HepG2 (cell line): ENCODE measurements at regions of chr2 and their contacts with region 1.

Region 1: GRCh38 chr2:109715313-109715805 is 78.7 kb upstream of the RGPD5 start:
- DNase-seq: peak; percentile 76
- ATAC-seq: peak; percentile 96
- H3K4me3 ChIP-seq: no peak overlapping the region
- H3K27ac ChIP-seq: no peak overlapping the region
- H3K4me1 ChIP-seq: peaks cover 40% of the 10 kb centered on the region
- H3K27me3 ChIP-seq: peaks cover 0 to 6% of the 10 kb centered on the region in 2 experiments; a peak in 4 of 5 replicates
- CTCF ChIP-seq: peak; percentile 98
- EP300 ChIP-seq: no peak
- POLR2A ChIP-seq: no peak
- RAD21 ChIP-seq: peak; percentile 96

Region 2: GRCh38 chr2:109382951-109383350 is 332.4 kb before region 1 on chr2:
- CTCF ChIA-PET with region 1: no interaction called
- POLR2A ChIA-PET with region 1: no interaction called
- in situ Hi-C with region 1: no loop called
- intact Hi-C with region 1: no loop called
- DNase-seq: no peak
- ATAC-seq: no peak
- H3K4me3 ChIP-seq: no peak overlapping the region
- H3K27ac ChIP-seq: no peak overlapping the region
- H3K4me1 ChIP-seq: no peaks in the 10 kb centered on the region
- H3K27me3 ChIP-seq: no peaks in the 10 kb centered on the region
- CTCF ChIP-seq: no peak
- EP300 ChIP-seq: no peak
- POLR2A ChIP-seq: no peak
- RAD21 ChIP-seq: no peak

Region 3: GRCh38 chr2:109516445-109517117 is 198.8 kb before region 1 on chr2:
- CTCF ChIA-PET with region 1: interaction called, 9 read pairs
- POLR2A ChIA-PET with region 1: no interaction called
- in situ Hi-C with region 1: no loop called
- intact Hi-C with region 1: loop called (anchors 1 kb)
- DNase-seq: peak; percentile 73
- ATAC-seq: peak; percentile 94
- H3K4me3 ChIP-seq: peak overlapping the region; percentile 40 to 77 (median 45)
- H3K27ac ChIP-seq: peak overlapping the region; percentile 14
- H3K4me1 ChIP-seq: peaks cover 36% of the 10 kb centered on the region
- H3K27me3 ChIP-seq: peaks cover 0 to 17% of the 10 kb centered on the region in 2 experiments; a peak in 2 of 5 replicates
- CTCF ChIP-seq: peak; percentile 100
- EP300 ChIP-seq: 0 out of 4 replicates have a peak, but pooled peaks of 1 of the 2 experiments have one; percentile 20
- POLR2A ChIP-seq: 0 out of 4 replicates have a peak, but pooled peaks of 1 of the 2 experiments have one; percentile 30
- RAD21 ChIP-seq: peak; percentile 98

Region 4: DNA sequence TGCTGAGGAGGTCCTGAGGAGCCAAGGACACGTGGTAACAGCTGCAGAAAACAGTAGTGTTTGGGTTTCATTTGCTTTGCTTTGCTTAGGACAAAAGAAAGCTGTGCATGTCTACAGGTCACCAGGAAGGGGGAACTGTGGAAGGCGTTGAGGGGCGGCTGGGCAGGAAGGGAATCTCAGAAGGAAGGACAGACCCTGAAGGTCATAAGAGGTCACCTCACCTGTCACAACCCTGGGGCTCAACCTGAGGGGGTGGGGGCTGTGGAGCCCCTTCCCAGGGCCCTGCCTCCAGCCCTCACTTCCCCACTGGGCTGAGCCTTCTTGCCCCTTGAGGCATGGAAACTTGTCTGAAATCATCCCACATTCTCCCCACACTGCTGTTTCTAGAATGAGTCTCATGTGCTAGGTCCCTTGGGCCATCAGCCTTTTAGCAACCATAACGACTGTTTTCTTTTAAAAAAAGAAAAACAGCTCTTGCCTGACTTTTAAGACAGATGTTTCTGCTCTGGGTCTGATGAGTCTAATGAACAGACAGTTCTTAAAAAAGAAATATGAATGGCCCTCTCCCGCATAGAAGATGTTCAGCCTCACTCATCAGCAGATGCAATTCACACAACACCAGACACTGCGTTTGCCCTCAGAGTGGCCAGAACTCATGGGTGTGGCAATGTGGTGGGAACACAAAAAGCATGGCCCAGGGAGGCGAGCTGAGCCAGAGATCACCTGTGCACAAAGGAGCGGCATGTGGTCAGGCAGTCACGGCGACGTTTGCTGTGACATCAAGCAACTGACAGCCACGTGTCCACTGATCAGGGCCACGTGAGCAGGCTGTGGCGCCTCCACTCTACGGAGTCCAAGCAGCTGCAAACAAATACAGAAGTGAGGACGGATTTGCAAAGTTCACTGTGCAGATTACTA is 185.6 kb before region 1 on chr2:
- CTCF ChIA-PET with region 1: no interaction called
- POLR2A ChIA-PET with region 1: no interaction called
- in situ Hi-C with region 1: loop called (anchors 5 kb)
- intact Hi-C with region 1: no loop called
- DNase-seq: no peak
- ATAC-seq: no peak
- H3K4me3 ChIP-seq: no peak overlapping the region
- H3K27ac ChIP-seq: no peak overlapping the region
- H3K4me1 ChIP-seq: peaks cover 13% of the 10 kb centered on the region
- H3K27me3 ChIP-seq: peaks cover 9 to 64% of the 10 kb centered on the region in 2 experiments
- CTCF ChIP-seq: 0 out of 2 replicates have a peak, but pooled peaks have one; percentile 4
- EP300 ChIP-seq: no peak
- POLR2A ChIP-seq: no peak
- RAD21 ChIP-seq: no peak

Region 5: DNA sequence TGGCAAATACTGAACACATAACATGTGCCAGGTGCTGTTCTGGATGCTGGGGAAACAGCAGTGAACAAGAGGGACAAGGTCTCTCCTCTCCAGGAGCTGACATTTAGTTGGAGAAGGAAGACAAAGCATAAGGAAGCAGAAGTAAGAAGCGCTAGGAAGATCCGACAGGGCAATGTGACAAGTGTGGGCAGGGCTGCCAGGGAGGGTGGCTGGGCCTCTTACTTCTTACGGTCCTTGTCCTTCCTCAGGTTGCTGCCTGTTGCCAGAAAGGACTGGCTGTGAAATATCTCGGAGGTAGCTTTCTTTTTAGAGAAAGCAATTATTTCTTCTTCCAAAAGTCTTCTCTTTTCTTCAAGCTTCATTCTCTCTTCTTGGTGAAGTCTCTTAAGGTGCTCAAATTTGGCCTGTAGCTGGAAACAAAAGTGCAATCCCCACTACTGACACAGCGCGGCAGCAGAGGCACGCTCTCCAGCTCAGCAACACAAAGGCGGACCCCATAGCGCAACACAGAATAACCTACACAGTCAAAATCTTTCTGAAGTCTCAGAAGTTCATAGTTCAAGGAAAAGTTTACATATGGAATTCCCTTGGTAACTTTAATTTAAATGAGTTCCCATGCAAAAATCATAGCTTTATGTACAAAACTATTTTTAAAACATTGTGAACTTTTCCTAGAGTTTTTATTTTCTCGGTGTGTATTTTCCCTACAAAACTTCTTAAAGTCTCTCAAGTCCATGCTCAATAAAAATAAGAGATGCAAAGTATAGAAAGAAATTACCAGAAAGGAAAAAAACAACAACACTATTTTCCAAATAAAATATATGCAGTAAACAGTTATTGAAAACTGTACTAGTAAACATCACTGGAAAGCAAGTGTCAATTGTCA is 169.3 kb before region 1 on chr2:
- CTCF ChIA-PET with region 1: interaction called, 47 read pairs
- POLR2A ChIA-PET with region 1: interaction called, 3 read pairs
- in situ Hi-C with region 1: no loop called
- intact Hi-C with region 1: loop called (anchors 1 kb)
- DNase-seq: peak; percentile 63
- ATAC-seq: peak; percentile 91
- H3K4me3 ChIP-seq: no peak overlapping the region
- H3K27ac ChIP-seq: no peak overlapping the region
- H3K4me1 ChIP-seq: peaks cover 14% of the 10 kb centered on the region
- H3K27me3 ChIP-seq: no peaks in the 10 kb centered on the region
- CTCF ChIP-seq: peak; percentile 95
- EP300 ChIP-seq: 0 out of 4 replicates have a peak, but pooled peaks of 1 of the 2 experiments have one; percentile 8
- POLR2A ChIP-seq: no peak
- RAD21 ChIP-seq: peak; percentile 97

Region 6: DNA sequence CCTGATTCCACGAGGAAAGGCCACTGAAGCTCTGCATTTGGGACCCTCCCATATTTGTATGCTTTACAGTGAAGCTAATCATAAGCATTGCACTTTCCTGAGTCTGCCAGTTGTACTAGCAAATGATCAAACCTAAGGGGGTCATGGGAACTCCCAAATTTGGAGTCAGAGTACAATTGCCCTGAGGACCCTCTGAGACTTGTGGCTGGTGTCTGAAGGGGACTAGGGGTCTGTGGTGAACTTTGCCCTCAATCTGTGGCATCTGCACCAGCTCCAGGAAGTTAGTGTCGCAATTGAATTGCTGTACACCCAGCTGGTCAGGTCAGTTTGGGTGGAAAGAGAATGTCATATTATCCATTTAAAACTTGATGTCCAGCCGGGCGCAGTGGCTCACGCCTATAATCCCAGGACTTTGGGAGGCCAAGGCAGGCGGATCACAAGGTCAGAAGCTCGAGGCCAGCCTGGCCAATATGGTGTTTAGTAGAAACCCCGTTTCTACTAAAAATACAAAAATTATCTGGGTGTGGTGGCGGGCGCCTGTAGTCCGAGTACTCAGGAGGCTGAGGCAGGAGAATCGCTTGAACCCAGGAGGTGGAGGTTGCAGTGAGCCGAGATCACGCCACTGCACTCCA is 83.1 kb before region 1 on chr2:
- CTCF ChIA-PET with region 1: no interaction called
- POLR2A ChIA-PET with region 1: no interaction called
- in situ Hi-C with region 1: no loop called
- intact Hi-C with region 1: loop called (anchors 1 kb)
- DNase-seq: peak; percentile 86
- ATAC-seq: peak; percentile 55
- H3K4me3 ChIP-seq: peak overlapping the region in 1 of 3 experiments; percentile 24; a peak in 2 of 6 replicates
- H3K27ac ChIP-seq: peak overlapping the region; percentile 68
- H3K4me1 ChIP-seq: peaks cover 74% of the 10 kb centered on the region
- H3K27me3 ChIP-seq: no peaks in the 10 kb centered on the region
- CTCF ChIP-seq: no peak; the same call in 1 of the 2 replicates
- EP300 ChIP-seq: peak; percentile 18 to 65; a peak in 1 of 4 replicates
- POLR2A ChIP-seq: no peak
- RAD21 ChIP-seq: no peak

Region 7: GRCh38 chr2:109663721-109664120 is 51.6 kb before region 1 on chr2:
- CTCF ChIA-PET with region 1: interaction called, 3 read pairs
- POLR2A ChIA-PET with region 1: no interaction called
- in situ Hi-C with region 1: loop called (anchors 5 kb)
- intact Hi-C with region 1: no loop called
- DNase-seq: peak; percentile 52
- ATAC-seq: peak; percentile 28
- H3K4me3 ChIP-seq: no peak overlapping the region
- H3K27ac ChIP-seq: no peak overlapping the region
- H3K4me1 ChIP-seq: peaks cover 50% of the 10 kb centered on the region
- H3K27me3 ChIP-seq: no peaks in the 10 kb centered on the region
- CTCF ChIP-seq: no peak
- EP300 ChIP-seq: no peak
- POLR2A ChIP-seq: no peak
- RAD21 ChIP-seq: no peak

Region 8: GRCh38 chr2:109699646-109700045 is 15.7 kb before region 1 on chr2:
- CTCF ChIA-PET with region 1: no interaction called
- POLR2A ChIA-PET with region 1: interaction called, 3 read pairs
- in situ Hi-C with region 1: no loop called
- intact Hi-C with region 1: loop called (anchors 2 kb)
- DNase-seq: no peak
- ATAC-seq: peak; percentile 20; the same call in 2 of the 3 replicates
- H3K4me3 ChIP-seq: no peak overlapping the region
- H3K27ac ChIP-seq: no peak overlapping the region
- H3K4me1 ChIP-seq: peaks cover 65% of the 10 kb centered on the region
- H3K27me3 ChIP-seq: no peaks in the 10 kb centered on the region
- CTCF ChIP-seq: no peak
- EP300 ChIP-seq: no peak
- POLR2A ChIP-seq: no peak
- RAD21 ChIP-seq: no peak

Region 9: GRCh38 chr2:109736177-109736827 is 20.9 kb after region 1 on chr2:
- CTCF ChIA-PET with region 1: no interaction called
- POLR2A ChIA-PET with region 1: no interaction called
- in situ Hi-C with region 1: no loop called
- intact Hi-C with region 1: no loop called
- DNase-seq: peak; percentile 69
- ATAC-seq: peak; percentile 90
- H3K4me3 ChIP-seq: no peak overlapping the region; a peak in 1 of 6 replicates
- H3K27ac ChIP-seq: no peak overlapping the region
- H3K4me1 ChIP-seq: peaks cover 11% of the 10 kb centered on the region
- H3K27me3 ChIP-seq: no peaks in the 10 kb centered on the region
- CTCF ChIP-seq: peak; percentile 92
- EP300 ChIP-seq: no peak
- POLR2A ChIP-seq: no peak
- RAD21 ChIP-seq: peak; percentile 76